PC-9 (cell line): ENCODE measurements at regions of chr4 and their contacts with region 1.

Region 1: DNA sequence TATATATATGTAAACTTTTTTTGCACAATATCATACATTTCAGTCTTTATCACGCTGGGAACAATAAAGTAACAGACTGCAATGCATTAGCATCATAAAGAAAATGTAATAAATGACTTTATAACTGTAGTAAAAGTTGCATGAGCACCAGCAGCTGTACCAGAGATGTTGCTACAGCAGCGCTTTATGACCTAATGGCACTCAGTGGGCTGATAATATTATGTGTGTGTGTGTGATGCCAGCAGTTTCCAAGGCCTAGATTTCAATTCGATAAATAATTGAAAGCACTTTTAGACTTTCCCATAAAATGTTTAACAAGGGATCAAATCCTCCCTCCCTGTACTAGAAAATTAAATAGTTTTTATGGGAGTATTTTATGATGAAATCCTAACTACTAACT is 367.6 kb upstream of the AGA start:
- DNase-seq: no peak
- H3K4me3 ChIP-seq: no peak overlapping the region
- H3K27ac ChIP-seq: no peak overlapping the region
- H3K4me1 ChIP-seq: no peaks in the 10 kb centered on the region
- H3K27me3 ChIP-seq: no peaks in the 10 kb centered on the region
- CTCF ChIP-seq: no peak

Region 2: GRCh38 chr4:177879851-177880250 is 70.1 kb after region 1 on chr4:
- CTCF ChIA-PET with region 1: no interaction called
- POLR2A ChIA-PET with region 1: no interaction called
- intact Hi-C with region 1: no loop called
- DNase-seq: peak in 1 of 2 experiments; percentile 5
- H3K4me3 ChIP-seq: no peak overlapping the region
- H3K27ac ChIP-seq: no peak overlapping the region
- H3K4me1 ChIP-seq: no peaks in the 10 kb centered on the region
- H3K27me3 ChIP-seq: no peaks in the 10 kb centered on the region
- CTCF ChIP-seq: no peak

Region 3: GRCh38 chr4:178086320-178086719 is 276.5 kb after region 1 on chr4:
- CTCF ChIA-PET with region 1: no interaction called
- POLR2A ChIA-PET with region 1: interaction called, 12 read pairs
- intact Hi-C with region 1: no loop called
- DNase-seq: no peak
- H3K4me3 ChIP-seq: no peak overlapping the region
- H3K27ac ChIP-seq: no peak overlapping the region
- H3K4me1 ChIP-seq: no peaks in the 10 kb centered on the region
- H3K27me3 ChIP-seq: no peaks in the 10 kb centered on the region
- CTCF ChIP-seq: no peak